Activated B cell treated with CpG ODN at 0.5 μM for 24 hours (primary cell): ENCODE measurements at regions of chr12 and their contacts with region 1.

Region 1: DNA sequence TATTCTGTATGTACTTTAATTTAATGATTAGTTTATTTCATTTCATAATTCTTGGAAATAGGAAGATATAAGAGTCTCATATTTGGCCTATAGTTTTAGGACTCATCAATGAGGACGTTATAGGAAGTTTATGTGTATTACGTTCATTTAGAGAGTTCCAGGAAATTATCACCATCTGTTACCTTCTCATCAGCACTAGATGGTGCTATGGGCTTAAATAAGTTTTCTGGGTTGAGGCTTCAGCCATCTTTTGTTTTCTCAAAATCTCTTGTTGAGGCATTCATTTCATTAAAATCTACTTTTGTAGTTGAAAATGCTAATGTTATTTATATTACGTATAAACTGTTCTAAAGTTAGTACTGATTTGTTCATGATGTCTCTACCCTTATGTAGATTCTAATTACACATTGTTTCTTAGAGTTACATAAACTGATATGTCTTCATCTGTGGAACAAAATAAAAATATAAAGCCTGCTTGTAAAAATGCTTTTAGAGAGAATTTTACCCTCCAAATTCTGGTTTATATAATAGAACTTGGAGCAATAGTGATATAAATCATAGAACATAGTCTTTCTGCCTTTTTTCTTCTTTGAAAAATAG is 89.2 kb downstream of the CFAP54 start:
- DNase-seq: no peak
- ATAC-seq: peak; percentile 50
- H3K4me3 Mint-ChIP-seq: no peak overlapping the region
- H3K27ac Mint-ChIP-seq: no peak overlapping the region
- H3K4me1 Mint-ChIP-seq: peaks cover 4% of the 10 kb centered on the region
- H3K27me3 Mint-ChIP-seq: no peaks in the 10 kb centered on the region
- CTCF ChIP-seq: no peak

Region 2: GRCh38 chr12:96906849-96907670 is 328.4 kb after region 1 on chr12 and contains the start of gene NEDD1:
- CTCF ChIA-PET with region 1: no interaction called
- POLR2A ChIA-PET with region 1: no interaction called
- intact Hi-C with region 1: loop called (anchors 5 kb)
- DNase-seq: peak; percentile 85
- ATAC-seq: peak; percentile 85
- H3K4me3 Mint-ChIP-seq: peak within 1 kb of the TSS; percentile 95
- H3K27ac Mint-ChIP-seq: peak within 1 kb of the TSS; percentile 91
- H3K4me1 Mint-ChIP-seq: peaks cover 41% of the 10 kb centered on the region
- H3K27me3 Mint-ChIP-seq: peaks cover 2% of the 10 kb centered on the region
- CTCF ChIP-seq: no peak
- total RNA-seq, gene NEDD1: 15.0 and 16.3 TPM in 2 replicates

Region 3: GRCh38 chr12:97148941-97149559 is 570.4 kb after region 1 on chr12:
- CTCF ChIA-PET with region 1: no interaction called
- POLR2A ChIA-PET with region 1: no interaction called
- intact Hi-C with region 1: loop called (anchors 1 kb)
- DNase-seq: peak; percentile 44
- ATAC-seq: peak; percentile 94
- H3K4me3 Mint-ChIP-seq: no peak overlapping the region
- H3K27ac Mint-ChIP-seq: no peak overlapping the region
- H3K4me1 Mint-ChIP-seq: no peaks in the 10 kb centered on the region
- H3K27me3 Mint-ChIP-seq: peaks cover 17% of the 10 kb centered on the region
- CTCF ChIP-seq: no peak

Region 4: DNA sequence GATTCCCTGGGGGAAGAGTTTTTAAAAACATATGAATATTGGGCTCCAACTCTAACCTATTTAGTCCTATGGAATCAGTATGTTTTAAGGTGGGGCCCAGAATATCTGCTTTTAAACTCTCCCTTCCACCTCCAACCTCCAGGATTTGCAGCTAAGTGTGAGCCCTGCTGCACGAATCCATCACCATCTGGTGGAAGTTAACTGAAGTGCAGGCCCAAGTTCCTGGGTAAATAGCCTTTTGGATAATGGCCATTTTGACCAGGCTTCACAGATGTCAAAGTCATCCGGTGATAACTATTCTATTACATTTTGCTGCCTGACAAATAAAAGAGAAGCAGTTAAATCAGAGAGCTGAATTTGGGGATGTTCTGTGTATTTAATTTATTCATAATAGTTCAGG is 825.9 kb after region 1 on chr12:
- CTCF ChIA-PET with region 1: interaction called, 4 read pairs
- POLR2A ChIA-PET with region 1: no interaction called
- intact Hi-C with region 1: loop called (anchors 1 kb)
- DNase-seq: no peak
- ATAC-seq: peak; percentile 50
- H3K4me3 Mint-ChIP-seq: no peak overlapping the region
- H3K27ac Mint-ChIP-seq: no peak overlapping the region
- H3K4me1 Mint-ChIP-seq: no peaks in the 10 kb centered on the region
- H3K27me3 Mint-ChIP-seq: peaks cover 3% of the 10 kb centered on the region
- CTCF ChIP-seq: no peak

Region 5: GRCh38 chr12:98002712-98003493 is 1424.3 kb after region 1 on chr12:
- CTCF ChIA-PET with region 1: interaction called, 3 read pairs
- POLR2A ChIA-PET with region 1: no interaction called
- intact Hi-C with region 1: loop called (anchors 1 kb)
- DNase-seq: no peak
- ATAC-seq: peak; percentile 28
- H3K4me3 Mint-ChIP-seq: no peak overlapping the region
- H3K27ac Mint-ChIP-seq: no peak overlapping the region
- H3K4me1 Mint-ChIP-seq: no peaks in the 10 kb centered on the region
- H3K27me3 Mint-ChIP-seq: peaks cover 6% of the 10 kb centered on the region
- CTCF ChIP-seq: no peak

Region 6: GRCh38 chr12:98397316-98398105 is 1818.9 kb after region 1 on chr12:
- CTCF ChIA-PET with region 1: interaction called, 3 read pairs
- POLR2A ChIA-PET with region 1: no interaction called
- intact Hi-C with region 1: loop called (anchors 1 kb)
- DNase-seq: peak; percentile 62
- ATAC-seq: peak; percentile 98
- H3K4me3 Mint-ChIP-seq: peak overlapping the region; percentile 83
- H3K27ac Mint-ChIP-seq: peak overlapping the region; percentile 27
- H3K4me1 Mint-ChIP-seq: peaks cover 33% of the 10 kb centered on the region
- H3K27me3 Mint-ChIP-seq: peaks cover 4% of the 10 kb centered on the region
- CTCF ChIP-seq: peak; percentile 32

Region 7: GRCh38 chr12:98532681-98533304 is 1954.2 kb after region 1 on chr12:
- CTCF ChIA-PET with region 1: no interaction called
- POLR2A ChIA-PET with region 1: no interaction called
- intact Hi-C with region 1: loop called (anchors 1 kb)
- DNase-seq: no peak
- ATAC-seq: peak; percentile 37
- H3K4me3 Mint-ChIP-seq: no peak overlapping the region
- H3K27ac Mint-ChIP-seq: no peak overlapping the region
- H3K4me1 Mint-ChIP-seq: peaks cover under 1% of the 10 kb centered on the region
- H3K27me3 Mint-ChIP-seq: no peaks in the 10 kb centered on the region
- CTCF ChIP-seq: no peak